Activated naive CD4-positive, alpha-beta T cell treated with anti-CD3 and anti-CD28 coated beads for 36 hours (primary cell): ENCODE measurements at regions of chr2 and their contacts with region 1.

Region 1: DNA sequence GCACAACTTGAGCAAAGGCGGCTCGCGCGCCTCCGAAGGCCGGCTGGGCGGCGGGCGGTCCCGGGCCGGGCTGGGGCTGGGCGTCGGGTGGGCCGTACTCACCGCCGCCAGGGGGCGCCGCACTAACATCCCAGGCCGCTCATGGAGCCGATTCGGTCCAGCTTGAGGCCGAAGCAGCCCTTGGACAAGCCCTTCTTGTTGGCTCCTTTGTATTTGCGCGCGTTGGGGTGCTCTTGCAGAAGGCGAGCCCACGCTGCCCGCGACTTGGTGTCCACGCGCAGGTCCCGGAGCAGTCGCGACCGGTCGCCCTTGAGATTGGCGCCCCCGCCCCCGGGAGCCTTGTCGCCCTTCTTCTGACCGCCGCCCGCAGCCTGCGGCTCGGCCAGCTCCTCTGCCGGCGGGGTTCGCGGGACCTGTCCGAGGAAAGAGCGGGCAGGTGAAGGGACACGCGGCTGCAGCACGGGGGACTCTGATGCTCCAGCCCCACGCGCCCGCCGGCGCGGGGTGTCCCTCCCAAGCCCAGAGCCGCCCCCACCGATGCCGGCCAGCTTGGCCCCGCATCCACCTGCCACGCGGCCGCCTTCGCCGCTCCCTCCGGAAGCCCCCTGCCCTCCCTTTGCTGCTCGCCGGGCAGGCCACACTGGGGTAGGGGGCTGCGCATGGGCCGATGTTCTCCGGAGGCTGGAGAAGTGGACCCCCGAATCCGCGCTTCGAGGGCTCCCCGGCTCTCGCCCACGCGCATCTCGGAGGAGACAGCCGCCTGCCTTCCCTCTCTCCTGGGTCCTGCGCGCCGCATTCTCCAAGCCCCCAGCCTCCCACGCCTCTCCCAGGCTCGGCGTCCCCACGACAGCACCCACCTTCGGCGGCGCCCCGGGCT is 655 bp downstream of the NPPC start:
- DNase-seq: peak; percentile 72
- H3K4me3 Mint-ChIP-seq: peak overlapping the region; percentile 73
- H3K27ac Mint-ChIP-seq: no peak overlapping the region
- H3K4me1 Mint-ChIP-seq: peaks cover 9% of the 10 kb centered on the region
- H3K27me3 Mint-ChIP-seq: peaks cover 44% of the 10 kb centered on the region

Region 2: GRCh38 chr2:231961349-231962166 is 36.0 kb after region 1 on chr2 and contains the start of gene DIS3L2:
- CTCF ChIA-PET with region 1: no interaction called
- intact Hi-C with region 1: loop called (anchors 5 kb)
- DNase-seq: peak; percentile 82
- H3K4me3 Mint-ChIP-seq: peak within 1 kb of the TSS; percentile 84
- H3K27ac Mint-ChIP-seq: peak within 1 kb of the TSS; percentile 86
- H3K4me1 Mint-ChIP-seq: peaks cover 31% of the 10 kb centered on the region
- H3K27me3 Mint-ChIP-seq: no peaks in the 10 kb centered on the region
- total RNA-seq, gene DIS3L2: 32.4 to 35.3 TPM

Region 3: GRCh38 chr2:232230557-232230956 is 305.0 kb after region 1 on chr2:
- CTCF ChIA-PET with region 1: interaction called, 5 read pairs
- intact Hi-C with region 1: loop called (anchors 1 kb)
- DNase-seq: peak; percentile 71
- H3K4me3 Mint-ChIP-seq: no peak overlapping the region
- H3K27ac Mint-ChIP-seq: no peak overlapping the region
- H3K4me1 Mint-ChIP-seq: peaks cover 27% of the 10 kb centered on the region
- H3K27me3 Mint-ChIP-seq: no peaks in the 10 kb centered on the region

Region 4: DNA sequence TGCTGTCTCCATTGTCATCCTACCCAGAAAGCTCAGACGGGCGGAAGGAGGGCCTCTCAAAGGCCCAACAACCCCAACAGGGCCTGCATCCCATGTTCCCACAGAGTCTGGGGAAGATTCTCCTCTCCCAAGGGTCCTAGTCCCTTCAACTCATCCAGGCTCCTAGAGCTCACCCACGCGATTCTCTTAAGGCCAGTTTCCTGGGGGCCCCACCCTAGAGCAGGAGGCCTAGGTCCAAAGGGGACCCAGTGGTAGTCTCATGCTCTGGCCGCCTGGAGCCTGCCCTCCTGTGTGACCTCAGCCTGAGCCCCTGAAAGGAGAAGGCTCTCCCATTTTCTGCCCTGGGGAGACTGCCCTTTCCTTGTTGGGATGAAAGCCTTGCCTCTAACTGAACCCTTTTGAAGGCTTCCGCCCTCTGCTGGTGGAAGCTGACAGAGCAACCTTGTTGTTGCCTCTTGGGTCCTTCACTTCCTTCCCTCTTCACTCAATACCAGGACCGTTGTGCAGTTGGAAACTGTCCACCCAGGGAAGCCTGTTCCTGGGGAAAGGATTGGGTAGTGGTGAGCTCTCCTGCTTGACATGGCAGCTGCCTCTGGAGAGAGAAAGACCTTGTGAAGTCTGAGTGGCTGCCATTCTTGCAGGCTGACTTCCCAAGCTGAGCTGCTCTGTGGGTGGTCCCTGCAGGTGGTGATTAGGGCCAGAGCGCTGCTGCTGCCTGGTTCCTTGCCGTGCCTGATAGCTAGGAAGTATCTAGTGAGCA is 367.0 kb after region 1 on chr2:
- CTCF ChIA-PET with region 1: interaction called, 6 read pairs
- intact Hi-C with region 1: loop called (anchors 1 kb)
- DNase-seq: peak; percentile 78
- H3K4me3 Mint-ChIP-seq: no peak overlapping the region
- H3K27ac Mint-ChIP-seq: no peak overlapping the region
- H3K4me1 Mint-ChIP-seq: peaks cover 5% of the 10 kb centered on the region
- H3K27me3 Mint-ChIP-seq: no peaks in the 10 kb centered on the region

Region 5: DNA sequence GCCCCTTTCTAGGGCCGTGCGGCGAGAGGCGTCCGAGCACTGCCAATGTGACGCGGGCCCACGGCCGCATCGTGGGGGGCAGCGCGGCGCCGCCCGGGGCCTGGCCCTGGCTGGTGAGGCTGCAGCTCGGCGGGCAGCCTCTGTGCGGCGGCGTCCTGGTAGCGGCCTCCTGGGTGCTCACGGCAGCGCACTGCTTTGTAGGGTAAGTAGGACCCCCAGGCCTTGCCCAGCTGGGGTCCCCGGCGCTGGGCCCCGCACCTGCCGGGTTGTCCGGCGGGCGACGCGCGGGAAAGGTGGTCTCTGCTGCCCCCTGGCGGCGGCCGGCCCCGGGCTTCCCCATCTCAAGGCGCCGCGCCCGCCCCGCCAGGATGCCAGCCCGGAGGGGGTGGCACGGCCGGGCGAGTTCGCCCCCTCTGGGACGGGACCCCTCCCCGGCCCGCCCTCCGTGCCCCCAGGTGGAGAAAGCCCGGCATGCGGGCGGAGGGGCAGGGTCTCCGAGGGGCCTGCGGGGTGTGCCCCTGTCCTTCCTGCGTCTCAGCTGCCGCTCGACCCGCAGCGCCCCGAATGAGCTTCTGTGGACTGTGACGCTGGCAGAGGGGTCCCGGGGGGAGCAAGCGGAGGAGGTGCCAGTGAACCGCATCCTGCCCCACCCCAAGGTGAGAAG is 596.5 kb after region 1 on chr2:
- CTCF ChIA-PET with region 1: no interaction called
- intact Hi-C with region 1: loop called (anchors 10 kb)
- DNase-seq: peak; percentile 63
- H3K4me3 Mint-ChIP-seq: no peak overlapping the region
- H3K27ac Mint-ChIP-seq: no peak overlapping the region
- H3K4me1 Mint-ChIP-seq: peaks cover 13% of the 10 kb centered on the region
- H3K27me3 Mint-ChIP-seq: peaks cover 39% of the 10 kb centered on the region

Region 6: GRCh38 chr2:232757905-232758304 is 832.4 kb after region 1 on chr2:
- CTCF ChIA-PET with region 1: no interaction called
- intact Hi-C with region 1: no loop called
- DNase-seq: no peak
- H3K4me3 Mint-ChIP-seq: no peak overlapping the region
- H3K27ac Mint-ChIP-seq: no peak overlapping the region
- H3K4me1 Mint-ChIP-seq: peaks cover 7% of the 10 kb centered on the region
- H3K27me3 Mint-ChIP-seq: no peaks in the 10 kb centered on the region